ENCODE measurements at regions of chr14 and their contacts with region 1.

Region 1: GRCh38 chr14:39680776-39681175 is 248.5 kb upstream of the FBXO33 start:
- DNase-seq: no peak
- ATAC-seq: no peak
- H3K4me3 ChIP-seq: no peak overlapping the region
- H3K27ac ChIP-seq: no peak overlapping the region
- H3K4me1 ChIP-seq: no peaks in the 10 kb centered on the region
- H3K27me3 ChIP-seq: no peaks in the 10 kb centered on the region
- CTCF ChIP-seq: no peak

Region 2: GRCh38 chr14:39499514-39499913 is 181.3 kb before region 1 on chr14:
- intact Hi-C with region 1: no loop called
- DNase-seq: no peak
- ATAC-seq: no peak
- H3K4me3 ChIP-seq: no peak overlapping the region
- H3K27ac ChIP-seq: no peak overlapping the region
- H3K4me1 ChIP-seq: no peaks in the 10 kb centered on the region
- H3K27me3 ChIP-seq: no peaks in the 10 kb centered on the region
- CTCF ChIP-seq: no peak

Region 3: DNA sequence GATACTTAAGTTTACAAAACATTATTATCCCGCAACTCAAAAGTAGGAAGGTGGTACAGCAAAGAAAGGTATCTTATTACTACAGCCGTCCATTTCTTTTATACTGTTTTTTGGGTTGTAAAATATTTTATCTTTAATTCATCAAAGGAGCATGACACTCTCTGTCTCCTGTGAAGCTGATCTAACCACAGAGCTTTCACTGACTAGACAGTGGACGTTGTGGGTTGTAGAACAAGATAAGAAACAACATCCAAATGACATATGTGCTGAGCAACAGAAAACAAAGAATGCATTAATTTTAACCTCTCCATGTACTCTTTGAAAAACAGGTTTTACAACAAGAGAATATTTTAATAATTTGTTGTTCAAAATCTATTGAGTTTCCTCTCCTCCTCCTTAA is 52.7 kb before region 1 on chr14:
- intact Hi-C with region 1: loop called in 1 of 10 experiments (anchors 2 kb)
- DNase-seq: no peak
- ATAC-seq: no peak
- H3K4me3 ChIP-seq: no peak overlapping the region
- H3K27ac ChIP-seq: no peak overlapping the region
- H3K4me1 ChIP-seq: no peaks in the 10 kb centered on the region
- H3K27me3 ChIP-seq: no peaks in the 10 kb centered on the region
- CTCF ChIP-seq: no peak

Region 4: DNA sequence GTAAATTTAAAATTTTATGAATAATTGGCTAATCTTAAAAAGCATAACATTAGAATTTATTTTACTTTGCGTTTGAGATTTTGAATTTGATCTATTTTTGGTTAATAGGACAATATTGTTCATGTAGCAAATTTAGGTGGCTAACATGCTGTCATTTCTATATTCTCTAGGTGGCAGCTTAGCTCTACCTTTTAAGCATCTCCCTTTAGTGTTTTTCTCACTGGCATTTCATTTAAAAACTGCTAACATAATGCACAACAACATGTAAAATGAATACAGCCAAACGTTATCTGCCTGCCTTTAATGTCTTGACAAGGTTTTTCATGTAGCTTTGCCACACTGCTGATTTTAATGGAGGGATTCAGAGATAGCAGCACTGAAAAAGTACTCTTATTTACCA is 23.8 kb after region 1 on chr14:
- intact Hi-C with region 1: no loop called
- DNase-seq: no peak
- ATAC-seq: no peak
- H3K4me3 ChIP-seq: no peak overlapping the region
- H3K27ac ChIP-seq: no peak overlapping the region
- H3K4me1 ChIP-seq: no peaks in the 10 kb centered on the region
- H3K27me3 ChIP-seq: no peaks in the 10 kb centered on the region
- CTCF ChIP-seq: peak in 4 of 9 donors; percentile 8 to 18 (median 12)

Measured in heart right ventricle (tissue), 16 donors.